GM12878 (cell line): ENCODE measurements at regions of chr5 and their contacts with region 1.

Region 1: DNA sequence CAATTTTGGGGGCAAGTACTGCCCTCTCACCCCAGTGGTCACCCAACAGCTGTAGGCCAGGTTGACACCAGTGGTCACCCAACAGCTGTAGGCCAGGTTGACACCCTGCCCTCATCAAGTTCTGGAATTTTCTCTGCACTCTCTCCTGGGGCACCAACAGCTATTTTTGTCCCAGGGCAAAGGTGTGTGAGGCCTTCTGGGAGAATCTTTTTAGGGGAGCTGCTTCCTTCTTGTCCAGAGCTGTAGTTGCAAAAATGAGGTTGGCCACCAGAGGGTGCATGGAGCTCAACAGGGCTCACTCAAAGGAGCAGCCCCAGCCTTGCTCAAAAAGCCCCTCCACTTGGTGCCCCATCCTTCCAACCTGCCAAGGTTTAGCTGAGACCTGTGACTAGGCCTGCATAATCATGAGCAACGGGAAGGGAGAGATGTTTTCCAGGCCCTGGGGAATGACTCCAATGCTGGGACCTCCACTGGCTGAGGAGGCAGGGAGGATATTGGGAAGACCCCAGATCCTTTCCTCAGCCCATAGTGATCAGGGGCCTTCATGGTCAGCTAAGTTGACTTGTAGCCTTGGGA is 10.6 kb upstream of the P4HA2 start:
- DNase-seq: peak; percentile 32
- ATAC-seq: peak; percentile 98
- H3K4me3 ChIP-seq: no peak overlapping the region
- H3K27ac ChIP-seq: no peak overlapping the region
- H3K4me1 ChIP-seq: no peaks in the 10 kb centered on the region
- H3K27me3 ChIP-seq: no peaks in the 10 kb centered on the region
- CTCF ChIP-seq: peak; percentile 83 to 87 (median 87)
- EP300 ChIP-seq: no peak
- POLR2A ChIP-seq: no peak
- RAD21 ChIP-seq: peak; percentile 83

Region 2: GRCh38 chr5:131148835-131149234 is 1089.4 kb before region 1 on chr5:
- CTCF ChIA-PET with region 1: no interaction called
- POLR2A ChIA-PET with region 1: no interaction called
- RAD21 ChIA-PET with region 1: no interaction called
- SMC1A ChIA-PET with region 1: no interaction called
- in situ Hi-C with region 1: no loop called
- intact Hi-C with region 1: no loop called
- DNase-seq: no peak
- ATAC-seq: no peak
- H3K4me3 ChIP-seq: no peak overlapping the region
- H3K27ac ChIP-seq: no peak overlapping the region
- H3K4me1 ChIP-seq: no peaks in the 10 kb centered on the region
- H3K27me3 ChIP-seq: no peaks in the 10 kb centered on the region
- CTCF ChIP-seq: no peak
- EP300 ChIP-seq: no peak
- POLR2A ChIP-seq: no peak
- RAD21 ChIP-seq: no peak

Region 3: GRCh38 chr5:132205385-132206125 is 32.7 kb before region 1 on chr5:
- CTCF ChIA-PET with region 1: interaction called, 18 read pairs
- POLR2A ChIA-PET with region 1: no interaction called
- RAD21 ChIA-PET with region 1: interaction called, 8 read pairs
- SMC1A ChIA-PET with region 1: interaction called, 28 read pairs
- in situ Hi-C with region 1: no loop called
- intact Hi-C with region 1: no loop called
- DNase-seq: no peak
- ATAC-seq: peak; percentile 69
- H3K4me3 ChIP-seq: no peak overlapping the region
- H3K27ac ChIP-seq: no peak overlapping the region
- H3K4me1 ChIP-seq: peaks cover 6% of the 10 kb centered on the region
- H3K27me3 ChIP-seq: no peaks in the 10 kb centered on the region
- CTCF ChIP-seq: no peak
- EP300 ChIP-seq: no peak
- POLR2A ChIP-seq: no peak
- RAD21 ChIP-seq: no peak

Region 4: GRCh38 chr5:132260714-132261551 is 22.7 kb after region 1 on chr5:
- CTCF ChIA-PET with region 1: interaction called, 117 read pairs
- POLR2A ChIA-PET with region 1: interaction called, 3 read pairs
- RAD21 ChIA-PET with region 1: interaction called, 35 read pairs
- SMC1A ChIA-PET with region 1: interaction called, 18 read pairs
- in situ Hi-C with region 1: no loop called
- intact Hi-C with region 1: no loop called
- DNase-seq: peak; percentile 61
- ATAC-seq: peak; percentile 73
- H3K4me3 ChIP-seq: no peak overlapping the region
- H3K27ac ChIP-seq: no peak overlapping the region
- H3K4me1 ChIP-seq: peaks cover 6% of the 10 kb centered on the region; the same call in 1 of the 2 replicates
- H3K27me3 ChIP-seq: peaks cover 2 to 7% of the 10 kb centered on the region in 2 experiments
- CTCF ChIP-seq: no peak
- EP300 ChIP-seq: no peak
- POLR2A ChIP-seq: no peak
- RAD21 ChIP-seq: no peak

Region 5: GRCh38 chr5:132293066-132293991 is 55.1 kb after region 1 on chr5:
- CTCF ChIA-PET with region 1: interaction called, 66 read pairs
- POLR2A ChIA-PET with region 1: interaction called, 3 read pairs
- RAD21 ChIA-PET with region 1: interaction called, 38 read pairs
- SMC1A ChIA-PET with region 1: interaction called, 38 read pairs
- in situ Hi-C with region 1: no loop called
- intact Hi-C with region 1: no loop called
- DNase-seq: no peak
- ATAC-seq: peak; percentile 67
- H3K4me3 ChIP-seq: peak overlapping the region; percentile 70
- H3K27ac ChIP-seq: no peak overlapping the region
- H3K4me1 ChIP-seq: peaks cover 21% of the 10 kb centered on the region
- H3K27me3 ChIP-seq: peaks cover 5 to 25% of the 10 kb centered on the region in 2 experiments; a peak in 3 of 4 replicates
- CTCF ChIP-seq: peak in 2 of 3 experiments; percentile 10 to 18; a peak in 2 of 6 replicates
- EP300 ChIP-seq: no peak
- POLR2A ChIP-seq: peak; percentile 60; the same call in 1 of the 2 replicates
- RAD21 ChIP-seq: no peak

Region 6: GRCh38 chr5:132354381-132355139 is 116.3 kb after region 1 on chr5:
- CTCF ChIA-PET with region 1: interaction called, 22 read pairs
- POLR2A ChIA-PET with region 1: interaction called, 4 read pairs
- RAD21 ChIA-PET with region 1: interaction called, 13 read pairs
- SMC1A ChIA-PET with region 1: interaction called, 12 read pairs
- in situ Hi-C with region 1: no loop called
- intact Hi-C with region 1: no loop called
- DNase-seq: no peak
- ATAC-seq: peak; percentile 12; the same call in 1 of the 3 replicates
- H3K4me3 ChIP-seq: no peak overlapping the region
- H3K27ac ChIP-seq: no peak overlapping the region
- H3K4me1 ChIP-seq: peaks cover 12% of the 10 kb centered on the region
- H3K27me3 ChIP-seq: no peaks in the 10 kb centered on the region
- CTCF ChIP-seq: no peak
- EP300 ChIP-seq: no peak
- POLR2A ChIP-seq: no peak
- RAD21 ChIP-seq: no peak

Region 7: DNA sequence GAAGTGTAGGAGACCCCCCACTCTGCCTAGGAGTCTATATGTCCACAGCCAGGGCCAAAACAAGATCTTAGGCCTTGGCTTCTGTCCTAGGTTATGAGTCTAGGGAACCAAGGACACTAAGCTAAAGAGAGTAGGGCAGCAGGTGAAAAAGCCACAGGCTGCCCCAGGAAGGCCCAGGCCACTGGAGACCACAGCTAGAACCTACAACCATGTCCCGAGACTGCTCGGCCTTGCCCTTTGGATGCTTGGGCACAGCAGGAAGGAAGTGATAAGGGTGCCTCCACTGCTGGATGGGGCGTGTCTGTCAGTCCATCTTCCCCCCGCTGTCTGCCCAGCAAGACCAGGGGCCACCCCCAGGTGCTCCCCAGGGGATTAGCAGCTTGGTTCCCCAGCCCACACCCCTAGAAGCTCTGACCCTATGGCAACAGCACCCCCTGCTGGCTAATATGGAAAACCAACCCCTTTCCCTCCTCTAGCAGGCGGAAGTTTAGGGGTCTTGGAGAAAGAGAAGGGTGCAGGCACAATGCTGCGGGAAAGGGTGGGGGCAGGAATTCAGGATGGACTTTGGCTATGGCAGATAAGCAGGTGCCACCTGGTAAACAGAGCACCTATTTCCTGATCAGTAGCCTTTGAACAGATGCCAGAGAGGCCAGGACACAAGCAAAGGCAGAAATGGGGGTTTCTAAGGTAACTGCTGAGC is 262.8 kb after region 1 on chr5:
- CTCF ChIA-PET with region 1: interaction called, 19 read pairs
- POLR2A ChIA-PET with region 1: no interaction called
- RAD21 ChIA-PET with region 1: interaction called, 42 read pairs
- SMC1A ChIA-PET with region 1: interaction called, 29 read pairs
- in situ Hi-C with region 1: loop called (anchors 10 kb)
- intact Hi-C with region 1: loop called (anchors 1 kb)
- DNase-seq: no peak
- ATAC-seq: peak; percentile 55
- H3K4me3 ChIP-seq: no peak overlapping the region
- H3K27ac ChIP-seq: peak overlapping the region; percentile 42; the same call in 1 of the 2 replicates
- H3K4me1 ChIP-seq: peaks cover 34% of the 10 kb centered on the region
- H3K27me3 ChIP-seq: no peaks in the 10 kb centered on the region
- CTCF ChIP-seq: peak; percentile 80 to 94 (median 85); a peak in 5 of 6 replicates
- EP300 ChIP-seq: 0 out of 4 replicates have a peak, but pooled peaks of 1 of the 2 experiments have one; percentile 11
- POLR2A ChIP-seq: no peak
- RAD21 ChIP-seq: peak; percentile 100

Region 8: DNA sequence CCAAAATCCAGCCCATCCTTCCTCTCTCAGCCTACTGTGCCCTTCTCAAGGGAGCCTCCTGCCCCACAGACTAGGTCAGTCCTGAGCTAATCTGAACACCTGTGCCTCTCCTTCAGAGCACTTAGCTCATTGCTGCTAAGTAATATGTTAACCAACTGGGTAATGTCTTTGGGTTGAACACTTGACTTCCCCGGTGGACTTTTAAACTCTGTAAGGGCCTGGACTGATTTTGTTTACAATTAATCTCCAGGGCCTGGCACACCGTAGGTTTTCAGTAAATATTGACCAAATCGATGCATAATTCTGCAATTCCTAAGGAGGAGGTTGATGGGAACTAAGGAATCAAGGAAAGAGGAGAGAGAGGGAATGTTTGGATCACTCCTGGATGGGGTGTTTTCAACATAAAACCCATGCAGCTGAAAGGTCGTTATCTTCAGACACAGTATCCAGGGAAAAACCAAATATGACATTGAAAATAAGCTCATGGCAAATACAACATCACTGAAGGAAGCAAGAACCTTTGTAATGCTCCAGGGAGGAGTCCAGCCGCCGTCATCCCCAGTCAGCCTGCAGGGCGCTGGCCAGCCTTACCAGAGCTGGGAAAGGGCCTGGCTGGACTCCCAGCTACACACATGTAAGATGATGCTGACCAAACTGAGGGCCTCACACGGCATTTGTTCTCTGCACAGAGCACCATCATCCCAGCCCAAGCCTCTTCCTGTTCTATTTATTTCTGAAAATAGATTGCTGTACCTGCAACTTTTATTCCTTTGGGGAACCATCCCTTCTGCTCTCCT is 1563.9 kb after region 1 on chr5:
- CTCF ChIA-PET with region 1: no interaction called
- POLR2A ChIA-PET with region 1: no interaction called
- RAD21 ChIA-PET with region 1: no interaction called
- SMC1A ChIA-PET with region 1: no interaction called
- in situ Hi-C with region 1: no loop called
- intact Hi-C with region 1: no loop called
- DNase-seq: no peak
- ATAC-seq: no peak
- H3K4me3 ChIP-seq: no peak overlapping the region
- H3K27ac ChIP-seq: no peak overlapping the region
- H3K4me1 ChIP-seq: no peaks in the 10 kb centered on the region
- H3K27me3 ChIP-seq: peaks cover 0 to 8% of the 10 kb centered on the region in 2 experiments; a peak in 2 of 4 replicates
- CTCF ChIP-seq: no peak
- EP300 ChIP-seq: no peak
- POLR2A ChIP-seq: no peak
- RAD21 ChIP-seq: no peak